Activated T-helper 2 cell treated with anti-CD3 and anti-CD28 coated beads, Interferon-gamma antibody, Interleukin-2, Interleukin-4, amounts not matched to agents 10 μg/mL and 5 μg/mL and 100 μg/mL, durations not matched to agents 14 hours and 24 hours and 36 hours (primary cell): ENCODE measurements at regions of chr19 and their contacts with region 1.

Region 1: GRCh38 chr19:46513461-46514236 is 18.0 kb upstream of the PNMA8B start:
- DNase-seq: peak; percentile 67
- H3K4me3 Mint-ChIP-seq: no peak overlapping the region
- H3K27ac Mint-ChIP-seq: no peak overlapping the region
- H3K4me1 Mint-ChIP-seq: peaks cover 13% of the 10 kb centered on the region
- H3K27me3 Mint-ChIP-seq: peaks cover 24% of the 10 kb centered on the region

Region 2: DNA sequence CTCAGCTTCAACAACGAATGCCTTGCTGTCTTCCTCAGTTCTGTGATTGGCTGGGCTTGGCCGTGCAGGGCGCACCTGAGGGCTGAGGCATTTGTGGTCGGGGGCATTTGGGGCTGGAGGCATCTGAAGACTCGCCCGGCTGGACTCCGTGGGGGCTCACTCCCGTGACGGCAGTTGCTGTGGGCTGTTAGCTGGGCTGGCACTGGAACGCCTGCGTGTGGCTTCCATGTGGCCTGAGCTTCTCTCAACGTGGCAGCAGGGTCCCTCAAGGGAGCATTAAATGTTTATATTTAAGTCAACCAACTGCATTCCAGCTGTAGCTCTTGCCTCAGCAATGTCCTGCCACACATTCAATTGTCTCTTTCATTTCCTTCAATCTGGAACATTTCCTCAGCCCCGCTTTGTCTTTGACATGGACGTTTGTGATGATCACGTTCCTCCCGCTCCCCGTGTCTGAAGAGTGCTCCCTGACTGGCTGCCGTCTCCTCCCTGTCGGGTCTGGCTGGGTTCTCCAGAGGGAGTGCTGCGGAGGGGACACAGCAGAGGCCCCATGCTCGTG is 121.3 kb before region 1 on chr19:
- intact Hi-C with region 1: loop called (anchors 2 kb)
- DNase-seq: no peak
- H3K4me3 Mint-ChIP-seq: no peak overlapping the region
- H3K27ac Mint-ChIP-seq: no peak overlapping the region
- H3K4me1 Mint-ChIP-seq: peaks cover 4% of the 10 kb centered on the region
- H3K27me3 Mint-ChIP-seq: no peaks in the 10 kb centered on the region

Region 3: GRCh38 chr19:46402725-46403124 is 110.9 kb before region 1 on chr19:
- intact Hi-C with region 1: loop called (anchors 2 kb)
- DNase-seq: no peak
- H3K4me3 Mint-ChIP-seq: no peak overlapping the region
- H3K27ac Mint-ChIP-seq: no peak overlapping the region
- H3K4me1 Mint-ChIP-seq: peaks cover 7% of the 10 kb centered on the region
- H3K27me3 Mint-ChIP-seq: peaks cover 51% of the 10 kb centered on the region

Region 4: GRCh38 chr19:46542428-46543230 is 29.0 kb after region 1 on chr19:
- intact Hi-C with region 1: loop called (anchors 1 kb)
- DNase-seq: peak; percentile 63
- H3K4me3 Mint-ChIP-seq: no peak overlapping the region
- H3K27ac Mint-ChIP-seq: no peak overlapping the region
- H3K4me1 Mint-ChIP-seq: peaks cover 6% of the 10 kb centered on the region
- H3K27me3 Mint-ChIP-seq: peaks cover 11% of the 10 kb centered on the region

Region 5: GRCh38 chr19:46579361-46579879 is 65.8 kb after region 1 on chr19:
- intact Hi-C with region 1: no loop called
- DNase-seq: no peak
- H3K4me3 Mint-ChIP-seq: no peak overlapping the region
- H3K27ac Mint-ChIP-seq: no peak overlapping the region
- H3K4me1 Mint-ChIP-seq: peaks cover 14% of the 10 kb centered on the region
- H3K27me3 Mint-ChIP-seq: peaks cover 15% of the 10 kb centered on the region